ENCODE measurements at regions of chr15 and their contacts with region 1.

Region 1: GRCh38 chr15:100349696-100350433 is 8.1 kb upstream of the ADAMTS17 start:
- DNase-seq: peak; percentile 96
- H3K4me3 ChIP-seq: peak overlapping the region; percentile 83
- H3K27ac ChIP-seq: peak overlapping the region; percentile 84
- H3K4me1 ChIP-seq: peaks cover 4% of the 10 kb centered on the region
- H3K27me3 ChIP-seq: no peaks in the 10 kb centered on the region
- CTCF ChIP-seq: peak; percentile 72

Region 2: DNA sequence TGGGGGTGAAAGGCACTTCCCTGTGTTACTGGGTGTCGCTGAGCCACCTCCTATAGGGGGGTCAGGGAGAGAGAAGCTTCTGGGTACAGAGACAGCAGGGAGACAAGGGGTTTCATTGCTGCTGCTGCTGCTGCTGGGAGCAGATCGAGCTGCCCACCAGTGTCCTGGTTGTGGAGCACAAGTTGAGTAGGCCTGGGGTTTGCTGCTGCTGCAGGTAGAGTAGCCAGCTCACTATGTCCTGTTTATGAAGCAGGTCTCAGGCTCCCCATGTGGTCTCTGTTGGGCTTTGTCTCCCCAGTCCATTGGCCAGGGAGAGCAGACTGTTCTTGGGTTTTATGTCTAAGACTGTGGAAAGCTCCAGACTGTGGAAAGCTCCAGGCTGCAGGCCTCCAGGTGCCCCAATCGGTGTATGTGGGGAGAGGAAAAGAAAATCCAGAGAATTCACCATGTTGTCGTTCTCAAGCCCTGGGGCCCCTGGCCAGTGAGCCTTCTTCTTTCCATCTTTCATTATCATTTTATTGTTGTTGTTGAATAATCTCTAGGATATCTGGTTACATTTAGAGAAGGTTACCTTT is 165.9 kb before region 1 on chr15:
- intact Hi-C with region 1: no loop called
- DNase-seq: no peak
- H3K4me3 ChIP-seq: no peak overlapping the region
- H3K27ac ChIP-seq: no peak overlapping the region
- H3K4me1 ChIP-seq: no peaks in the 10 kb centered on the region
- H3K27me3 ChIP-seq: no peaks in the 10 kb centered on the region
- CTCF ChIP-seq: no peak

Region 3: DNA sequence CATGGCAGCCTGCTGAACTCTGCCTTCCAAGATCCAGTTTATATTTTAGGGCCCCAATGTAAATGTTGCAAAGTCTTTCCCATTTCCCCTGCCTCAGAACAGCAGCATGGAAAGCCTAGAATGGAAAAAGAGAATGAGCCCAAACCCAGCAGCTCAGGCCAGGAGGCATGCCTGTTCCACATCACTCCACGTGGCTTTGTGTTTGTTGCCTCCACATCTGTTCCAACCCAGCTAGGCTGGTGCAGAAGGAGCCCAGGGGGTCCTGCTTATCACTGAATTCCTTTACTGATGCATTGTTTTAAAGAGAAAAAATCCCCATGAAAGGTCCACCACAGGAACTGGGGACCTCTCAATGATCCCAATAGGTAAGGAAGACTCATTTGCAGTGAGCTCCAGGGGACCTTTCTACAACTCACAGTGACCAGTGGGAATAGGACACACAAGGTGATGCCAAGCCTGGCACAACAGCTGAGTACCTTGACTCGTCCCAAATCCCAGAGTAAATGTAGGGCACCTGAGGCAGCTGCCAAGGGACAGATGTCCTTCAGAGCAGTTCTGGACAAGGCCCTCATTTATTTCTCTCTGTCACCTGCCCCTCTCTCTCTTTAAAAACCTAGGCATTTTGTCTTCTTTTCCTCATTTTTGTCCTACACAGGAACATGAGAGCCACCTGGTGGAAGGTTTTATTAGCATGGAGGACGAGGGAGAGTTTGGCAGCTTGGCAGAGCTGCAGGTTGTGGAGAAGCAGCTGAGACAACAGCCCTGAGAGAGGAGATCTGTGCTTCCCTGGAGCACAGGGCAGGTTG is 33.6 kb after region 1 on chr15:
- intact Hi-C with region 1: loop called (anchors 2 kb)
- DNase-seq: peak; percentile 28
- H3K4me3 ChIP-seq: no peak overlapping the region
- H3K27ac ChIP-seq: no peak overlapping the region
- H3K4me1 ChIP-seq: no peaks in the 10 kb centered on the region
- H3K27me3 ChIP-seq: no peaks in the 10 kb centered on the region
- CTCF ChIP-seq: peak; percentile 25

Region 4: DNA sequence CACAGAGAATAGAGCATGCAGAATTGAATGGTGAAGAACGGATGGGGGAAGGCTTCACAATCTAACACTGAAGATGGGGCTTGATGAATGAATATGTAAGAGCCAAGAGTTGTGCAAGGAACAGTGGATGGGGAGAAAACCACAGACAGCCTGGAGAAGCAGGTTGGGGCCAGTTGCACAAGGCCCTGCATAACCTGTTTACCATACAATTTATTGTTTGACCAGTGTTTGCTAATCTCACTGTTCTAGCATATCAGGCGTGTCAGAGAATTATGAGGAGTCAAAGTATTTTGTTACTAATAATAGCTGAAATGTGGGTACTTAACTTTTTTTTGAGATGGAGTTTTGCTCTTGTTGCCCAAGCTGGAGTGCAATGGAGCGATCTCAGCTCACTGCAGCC is 215.7 kb after region 1 on chr15:
- intact Hi-C with region 1: loop called (anchors 5 kb)
- DNase-seq: no peak
- H3K4me3 ChIP-seq: no peak overlapping the region
- H3K27ac ChIP-seq: no peak overlapping the region
- H3K4me1 ChIP-seq: no peaks in the 10 kb centered on the region
- H3K27me3 ChIP-seq: no peaks in the 10 kb centered on the region
- CTCF ChIP-seq: no peak

Measured in colonic mucosa (tissue), 4 donors.